ENCODE measurements at regions of chr13 and their contacts with region 1.

Region 1: GRCh38 chr13:98033277-98034247 is 80.1 kb downstream of the IPO5 start:
- DNase-seq: no peak
- H3K4me3 ChIP-seq: no peak overlapping the region
- H3K27ac ChIP-seq: no peak overlapping the region
- H3K4me1 ChIP-seq: peaks cover 0 to 6% (median 3%) of the 10 kb centered on the region in 4 donors
- H3K27me3 ChIP-seq: no peaks in the 10 kb centered on the region
- CTCF ChIP-seq: no peak
- EP300 ChIP-seq: no peak
- POLR2A ChIP-seq: no peak

Region 2: DNA sequence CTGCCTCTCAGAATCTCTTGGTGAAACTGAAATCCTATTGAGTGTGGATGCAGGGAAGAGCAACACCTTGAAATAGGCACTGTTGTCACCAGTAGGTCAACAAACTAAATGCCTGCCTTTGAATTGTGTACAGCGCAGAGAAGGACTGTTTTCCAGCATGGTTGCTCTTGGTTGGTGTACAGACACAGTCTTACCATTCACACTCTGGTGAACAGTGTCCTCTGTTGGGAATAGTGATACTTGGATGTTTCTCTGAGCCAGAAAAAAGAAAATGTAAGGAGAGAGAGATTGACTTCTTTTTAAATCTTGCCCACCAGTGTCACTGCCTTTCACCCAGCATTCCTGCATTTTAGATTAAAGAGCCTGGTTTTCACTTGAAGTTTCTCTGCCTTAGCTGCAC is 363.7 kb after region 1 on chr13:
- intact Hi-C with region 1: loop called (anchors 10 kb)
- DNase-seq: no peak
- H3K4me3 ChIP-seq: no peak overlapping the region
- H3K27ac ChIP-seq: no peak overlapping the region
- H3K4me1 ChIP-seq: peaks cover 0 to 11% (median 4%) of the 10 kb centered on the region in 4 donors
- H3K27me3 ChIP-seq: no peaks in the 10 kb centered on the region
- CTCF ChIP-seq: peak in 3 of 4 experiments; percentile 11 to 43 (median 34)
- EP300 ChIP-seq: no peak
- POLR2A ChIP-seq: no peak

Measured in sigmoid colon (tissue), 7 donors.